Activated T-helper 2 cell treated with anti-CD3 and anti-CD28 coated beads, Interferon-gamma antibody, Interleukin-2, Interleukin-4, amounts not matched to agents 10 μg/mL and 5 μg/mL and 100 μg/mL, durations not matched to agents 14 hours and 24 hours and 36 hours (primary cell): ENCODE measurements at regions of chr3 and their contacts with region 1.

Region 1: GRCh38 chr3:156509189-156510174 is 45.4 kb downstream of the SSR3 start:
- DNase-seq: no peak
- H3K4me3 Mint-ChIP-seq: no peak overlapping the region
- H3K27ac Mint-ChIP-seq: no peak overlapping the region
- H3K4me1 Mint-ChIP-seq: peaks cover 13% of the 10 kb centered on the region
- H3K27me3 Mint-ChIP-seq: peaks cover 54% of the 10 kb centered on the region

Region 2: DNA sequence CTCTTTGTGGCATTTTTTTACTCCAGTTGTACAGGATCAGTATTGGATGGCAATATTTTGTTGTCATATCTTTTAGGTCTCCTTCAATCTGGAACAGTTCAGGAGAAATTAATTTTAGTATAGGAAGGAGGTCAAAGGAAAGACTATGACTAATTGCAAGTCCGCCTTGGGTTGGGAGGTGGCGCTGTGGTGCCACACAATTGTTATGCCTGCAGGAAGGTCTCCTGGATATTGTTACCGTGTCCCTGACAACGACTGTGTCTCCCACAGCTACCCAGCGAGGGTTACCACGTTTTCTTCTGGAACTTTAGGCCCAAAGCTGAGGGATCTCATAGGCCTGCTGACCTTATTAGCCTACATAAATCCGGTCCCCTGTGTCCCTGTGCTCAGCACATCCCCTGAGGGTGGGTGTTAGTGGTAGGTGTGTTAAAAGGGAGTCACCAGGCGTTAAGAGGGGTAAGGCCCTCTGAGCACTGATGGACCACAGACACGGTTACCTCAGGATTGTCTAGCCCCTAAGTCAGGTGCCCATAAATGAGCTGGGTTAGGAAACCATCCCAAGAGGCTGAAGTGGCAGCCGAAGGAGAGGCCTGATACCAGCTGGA is 357.6 kb before region 1 on chr3:
- intact Hi-C with region 1: loop called (anchors 1 kb)
- DNase-seq: peak; percentile 18
- H3K4me3 Mint-ChIP-seq: no peak overlapping the region
- H3K27ac Mint-ChIP-seq: no peak overlapping the region
- H3K4me1 Mint-ChIP-seq: peaks cover 4% of the 10 kb centered on the region
- H3K27me3 Mint-ChIP-seq: peaks cover 22% of the 10 kb centered on the region

Region 3: GRCh38 chr3:156396851-156397250 is 112.6 kb before region 1 on chr3:
- intact Hi-C with region 1: loop called (anchors 10 kb)
- DNase-seq: no peak
- H3K4me3 Mint-ChIP-seq: no peak overlapping the region
- H3K27ac Mint-ChIP-seq: no peak overlapping the region
- H3K4me1 Mint-ChIP-seq: no peaks in the 10 kb centered on the region
- H3K27me3 Mint-ChIP-seq: peaks cover 27% of the 10 kb centered on the region

Region 4: GRCh38 chr3:156449712-156450574 is 59.5 kb before region 1 on chr3:
- intact Hi-C with region 1: loop called (anchors 2 kb)
- DNase-seq: no peak
- H3K4me3 Mint-ChIP-seq: no peak overlapping the region
- H3K27ac Mint-ChIP-seq: no peak overlapping the region
- H3K4me1 Mint-ChIP-seq: no peaks in the 10 kb centered on the region
- H3K27me3 Mint-ChIP-seq: peaks cover 36% of the 10 kb centered on the region

Region 5: DNA sequence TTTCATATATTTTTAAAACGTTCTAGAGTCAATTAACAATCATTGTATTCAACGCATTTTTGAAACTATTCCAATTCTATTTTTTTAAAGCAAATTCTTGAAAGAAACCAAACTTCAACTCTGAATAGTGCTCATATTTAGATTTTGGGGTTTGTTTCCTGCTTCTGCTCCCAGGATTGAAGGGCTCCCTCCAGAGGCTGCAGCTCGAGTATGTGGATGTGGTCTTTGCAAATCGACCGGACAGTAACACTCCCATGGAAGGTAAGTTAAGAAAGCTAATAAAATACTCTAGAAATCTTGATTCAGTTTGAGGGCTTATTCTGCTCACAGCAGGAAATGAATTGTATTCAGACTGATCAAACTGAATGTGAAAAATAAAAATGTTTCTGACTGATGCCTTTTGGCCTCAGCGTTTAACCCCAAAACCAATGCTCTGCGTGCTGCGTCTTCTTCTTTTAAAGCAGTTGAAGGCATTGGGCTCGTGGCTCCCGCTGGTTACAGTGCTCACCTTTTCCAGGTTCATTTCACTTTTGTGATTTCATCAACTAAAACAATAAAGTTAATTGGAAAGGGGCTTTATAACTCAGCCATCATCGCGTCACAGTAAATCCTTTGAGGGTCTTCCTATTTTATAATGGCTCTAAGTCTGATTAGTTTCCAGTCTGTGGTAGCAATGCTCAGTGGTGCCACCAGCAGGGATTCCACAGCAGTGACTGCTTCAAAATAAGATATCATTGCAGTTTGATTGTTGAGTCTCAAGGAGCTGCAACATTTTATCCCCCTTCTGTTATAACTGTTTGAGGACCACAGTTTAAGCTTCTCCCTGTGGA is 34.7 kb before region 1 on chr3:
- intact Hi-C with region 1: loop called (anchors 1 kb)
- DNase-seq: no peak
- H3K4me3 Mint-ChIP-seq: no peak overlapping the region
- H3K27ac Mint-ChIP-seq: no peak overlapping the region
- H3K4me1 Mint-ChIP-seq: no peaks in the 10 kb centered on the region
- H3K27me3 Mint-ChIP-seq: peaks cover 57% of the 10 kb centered on the region

Region 6: DNA sequence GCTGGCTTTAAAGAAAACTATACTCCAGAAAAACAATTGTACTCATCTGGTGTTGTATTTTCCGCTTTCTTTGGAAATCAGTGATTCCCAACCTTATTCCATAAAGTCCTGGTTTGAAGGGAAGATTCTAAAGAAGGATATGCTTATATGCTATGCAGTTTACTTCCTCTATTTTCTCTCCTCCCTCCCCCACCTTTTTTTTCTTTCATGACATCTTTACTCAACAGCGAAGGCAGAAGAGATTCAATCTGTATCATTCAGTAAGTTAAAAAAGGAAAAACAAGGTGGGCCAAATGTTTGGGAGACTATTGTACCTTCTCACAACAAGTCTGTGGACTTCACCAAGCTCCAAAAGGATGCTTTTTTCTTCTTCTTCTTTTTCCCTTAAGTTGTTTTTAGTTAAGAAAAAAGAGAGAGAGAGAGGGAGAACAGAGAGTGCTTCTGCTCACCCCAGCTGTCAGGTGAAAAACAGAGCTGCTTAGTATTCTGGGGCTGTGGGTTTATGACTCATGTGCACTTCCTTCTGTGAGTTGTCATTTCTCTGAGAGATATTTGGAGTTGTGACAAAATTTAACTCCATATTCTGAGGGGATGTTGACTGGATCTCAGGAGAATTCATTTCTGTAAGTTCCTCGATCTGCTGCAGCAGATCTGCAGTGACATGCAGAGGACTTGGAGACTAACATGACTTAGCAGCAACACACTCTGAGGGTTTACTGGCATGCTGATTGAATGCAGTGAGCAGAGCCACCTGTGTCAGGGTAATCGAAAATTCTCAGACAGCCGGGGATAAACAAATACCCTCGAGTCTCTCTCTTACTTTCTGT is 25.3 kb before region 1 on chr3:
- intact Hi-C with region 1: loop called (anchors 1 kb)
- DNase-seq: peak; percentile 49
- H3K4me3 Mint-ChIP-seq: peak overlapping the region; percentile 62
- H3K27ac Mint-ChIP-seq: peak overlapping the region; percentile 86
- H3K4me1 Mint-ChIP-seq: peaks cover 24% of the 10 kb centered on the region
- H3K27me3 Mint-ChIP-seq: peaks cover 24% of the 10 kb centered on the region

Region 7: GRCh38 chr3:156723182-156723619 is 213.7 kb after region 1 on chr3:
- intact Hi-C with region 1: no loop called
- DNase-seq: no peak
- H3K4me3 Mint-ChIP-seq: no peak overlapping the region
- H3K27ac Mint-ChIP-seq: peak overlapping the region; percentile 26
- H3K4me1 Mint-ChIP-seq: peaks cover 27% of the 10 kb centered on the region
- H3K27me3 Mint-ChIP-seq: no peaks in the 10 kb centered on the region